ENCODE measurements at regions of chr5 and their contacts with region 1.

Region 1: GRCh38 chr5:142296914-142297417 is 27.9 kb downstream of the SPRY4 start:
- DNase-seq: no peak
- ATAC-seq: peak; percentile 58

Region 2: GRCh38 chr5:142316051-142316450 is 19.1 kb after region 1 on chr5:
- intact Hi-C with region 1: loop called (anchors 2 kb)
- DNase-seq: no peak
- ATAC-seq: peak; percentile 49

Region 3: GRCh38 chr5:142874537-142874936 is 577.6 kb after region 1 on chr5:
- intact Hi-C with region 1: no loop called
- DNase-seq: peak; percentile 79
- ATAC-seq: no peak